Spleen (tissue), 13 donors: ENCODE measurements at regions of chr20 and their contacts with region 1.

Region 1: DNA sequence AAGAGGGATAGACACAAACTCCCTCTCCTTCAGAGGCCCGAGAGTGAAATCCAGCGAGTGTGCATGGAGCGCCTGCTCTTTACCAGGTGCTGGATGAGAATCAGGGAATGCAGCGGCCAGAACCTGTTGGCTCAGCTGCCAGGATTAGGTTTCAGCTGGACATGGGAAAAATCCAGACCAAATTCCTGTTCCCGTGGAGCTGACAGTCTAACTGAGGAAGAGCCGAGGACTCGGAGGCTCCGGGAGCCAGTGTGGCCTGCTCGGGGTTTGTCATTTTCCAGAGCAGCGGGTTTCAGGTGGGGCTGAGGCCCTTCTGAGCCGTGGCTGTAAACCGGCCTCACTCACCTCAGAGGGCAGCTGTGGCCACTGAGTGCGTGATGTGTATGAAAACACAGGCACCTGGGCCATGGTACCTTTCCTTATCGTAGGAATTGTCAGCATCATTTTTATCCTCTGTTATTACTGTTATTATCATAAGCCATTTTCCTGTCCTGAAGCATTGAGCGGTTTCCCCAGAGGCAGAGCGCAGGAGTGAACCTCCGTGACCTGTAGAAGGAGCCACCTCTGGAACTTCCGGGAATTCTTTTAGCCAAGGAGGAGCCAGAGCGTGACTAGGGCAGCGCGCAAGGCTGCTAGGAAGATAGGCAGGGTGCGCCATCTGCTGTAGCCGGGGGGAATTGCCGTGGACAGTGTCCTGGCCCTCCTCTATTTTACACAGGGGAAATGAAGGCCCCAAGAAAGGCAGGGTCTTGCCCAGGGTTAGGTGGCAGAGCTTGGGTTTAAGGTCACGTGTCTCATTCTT is 27.3 kb downstream of the PKIG start:
- DNase-seq: peak; percentile 94
- H3K4me3 ChIP-seq: peak overlapping the region in 3 of 8 donors; percentile 5 to 49 (median 17)
- H3K27ac ChIP-seq: peak overlapping the region in 7 of 8 donors; percentile 62 to 82 (median 78)
- H3K4me1 ChIP-seq: peaks cover 18 to 53% (median 35%) of the 10 kb centered on the region in 6 donors
- H3K27me3 ChIP-seq: no peaks in the 10 kb centered on the region
- CTCF ChIP-seq: peak; percentile 84 to 99 (median 96)
- POLR2A ChIP-seq: no peak

Region 2: DNA sequence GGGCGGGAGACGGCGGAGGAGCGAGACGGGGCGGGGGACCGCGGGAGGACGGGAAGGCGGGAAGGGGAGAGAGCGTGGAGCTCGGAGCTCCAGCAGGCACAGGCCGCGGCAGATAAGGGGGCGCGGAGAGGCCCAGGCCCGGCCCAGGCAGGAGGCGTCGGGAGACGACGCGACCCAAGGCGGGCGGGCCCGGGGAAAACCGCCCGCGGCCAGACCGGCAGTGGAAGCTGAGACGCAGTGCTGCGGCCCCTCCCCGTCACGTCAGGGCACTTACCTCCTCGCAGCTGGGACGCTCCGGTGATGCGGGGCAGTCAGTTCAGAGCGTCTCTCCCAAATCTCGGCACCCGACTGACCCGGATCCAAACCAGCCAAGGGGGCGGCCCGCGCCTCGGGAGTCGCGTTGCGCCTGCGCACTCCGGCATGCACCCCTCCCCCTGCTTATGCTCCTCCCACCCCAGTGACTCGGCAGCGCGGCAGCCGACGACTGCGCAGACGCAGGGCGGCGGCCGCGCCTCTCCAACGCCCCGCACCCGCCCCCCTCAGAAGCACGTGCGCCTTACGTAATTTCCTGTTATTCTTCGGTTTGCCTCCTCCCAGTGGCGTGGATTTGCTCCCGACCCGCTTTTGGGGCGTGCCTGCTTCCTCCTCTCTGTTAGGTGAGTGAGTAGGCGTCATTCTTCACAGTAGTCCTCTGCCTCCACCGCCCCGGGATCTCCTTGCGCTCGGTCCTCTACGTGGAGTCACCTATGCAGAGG is 399.1 kb before region 1 on chr20 and contains the start of gene OSER1:
- intact Hi-C with region 1: loop called (anchors 10 kb)
- DNase-seq: peak; percentile 99
- H3K4me3 ChIP-seq: peak within 1 kb of the TSS; percentile 76 to 99 (median 95)
- H3K27ac ChIP-seq: peak within 1 kb of the TSS; percentile 87 to 99 (median 98)
- H3K4me1 ChIP-seq: peaks cover 18 to 76% (median 58%) of the 10 kb centered on the region in 6 donors
- H3K27me3 ChIP-seq: no peaks in the 10 kb centered on the region
- CTCF ChIP-seq: peak in 4 of 11 experiments; percentile 17 to 51 (median 40)
- POLR2A ChIP-seq: peak; percentile 86 to 95 (median 94)
- total RNA-seq, gene OSER1: 28.5 to 42.0 (median 36.1) TPM

Region 3: GRCh38 chr20:44388466-44389023 is 221.2 kb before region 1 on chr20:
- intact Hi-C with region 1: loop called (anchors 5 kb)
- DNase-seq: peak; percentile 88
- H3K4me3 ChIP-seq: peak overlapping the region in 1 of 8 donors; percentile 37
- H3K27ac ChIP-seq: no peak overlapping the region
- H3K4me1 ChIP-seq: peaks cover 0 to 11% (median 7%) of the 10 kb centered on the region in 6 donors
- H3K27me3 ChIP-seq: peaks cover 0 to 65% (median 3%) of the 10 kb centered on the region in 7 donors
- CTCF ChIP-seq: peak in 10 of 11 experiments; percentile 40 to 78 (median 60)
- POLR2A ChIP-seq: no peak

Region 4: GRCh38 chr20:44475694-44476560 is 133.8 kb before region 1 on chr20 and contains the start of gene TTPAL:
- intact Hi-C with region 1: loop called (anchors 5 kb)
- DNase-seq: peak; percentile 98
- H3K4me3 ChIP-seq: peak within 1 kb of the TSS; percentile 53 to 80 (median 61)
- H3K27ac ChIP-seq: peak within 1 kb of the TSS; percentile 85 to 97 (median 93)
- H3K4me1 ChIP-seq: peaks cover 4 to 57% (median 31%) of the 10 kb centered on the region in 6 donors
- H3K27me3 ChIP-seq: no peaks in the 10 kb centered on the region
- CTCF ChIP-seq: peak in 10 of 11 experiments; percentile 18 to 68 (median 45)
- POLR2A ChIP-seq: peak in 2 of 3 donors; percentile 95
- total RNA-seq, gene TTPAL: 11.1 to 16.3 (median 12.3) TPM

Region 5: DNA sequence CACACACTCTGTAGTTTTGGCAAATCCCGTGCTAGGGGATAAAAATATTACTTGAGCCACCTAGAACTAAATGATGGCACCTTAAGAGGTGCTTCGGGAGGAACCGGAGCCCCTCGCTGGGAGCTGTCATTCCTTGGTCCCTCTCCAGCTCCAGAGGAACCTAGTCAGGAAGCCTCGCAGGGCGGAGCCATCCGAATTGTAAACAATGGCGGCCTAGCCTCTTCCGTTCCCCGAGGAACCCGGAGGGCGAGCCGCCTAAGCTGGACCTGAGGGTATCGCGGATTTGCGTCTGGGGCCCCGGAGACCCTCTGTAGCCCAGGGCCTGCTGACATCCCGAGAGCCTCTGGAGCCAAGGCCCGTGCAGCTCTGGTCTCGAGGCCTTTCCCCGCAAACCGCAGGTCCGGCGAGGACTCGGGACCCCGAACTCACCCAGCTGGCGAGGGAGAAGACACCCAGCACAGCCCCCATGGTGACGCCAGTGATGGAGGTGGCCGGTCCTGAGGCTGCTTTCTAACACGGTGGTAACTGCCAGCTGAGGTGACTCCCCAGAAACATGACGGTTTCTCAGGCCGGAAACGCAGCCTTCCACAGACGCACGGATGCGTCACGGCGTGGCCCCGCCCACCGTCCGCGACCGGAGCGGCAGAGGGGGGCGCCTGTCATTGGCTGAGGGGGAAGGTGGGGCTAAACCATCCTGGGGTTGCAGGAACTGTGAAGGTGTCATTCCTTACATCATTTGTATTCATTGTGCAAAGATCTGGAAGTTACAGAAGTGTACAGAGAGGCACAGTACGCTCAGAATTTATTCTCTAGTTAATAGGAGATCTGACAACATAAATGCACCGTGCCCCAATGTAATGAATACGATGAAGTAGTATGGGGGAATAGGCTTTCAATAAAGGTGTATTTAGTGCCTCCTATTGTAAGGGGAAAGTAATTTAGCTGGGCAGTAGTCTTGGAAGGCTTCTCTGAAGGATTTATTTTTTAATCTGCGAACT is 87.9 kb before region 1 on chr20 and contains the start of gene SERINC3:
- intact Hi-C with region 1: loop called (anchors 10 kb)
- DNase-seq: peak; percentile 99
- H3K4me3 ChIP-seq: peak within 1 kb of the TSS; percentile 68 to 97 (median 76)
- H3K27ac ChIP-seq: peak within 1 kb of the TSS; percentile 92 to 100 (median 98)
- H3K4me1 ChIP-seq: peaks cover 27 to 56% (median 50%) of the 10 kb centered on the region in 6 donors
- H3K27me3 ChIP-seq: no peaks in the 10 kb centered on the region
- CTCF ChIP-seq: peak in 1 of 11 experiments; percentile 42
- POLR2A ChIP-seq: peak; percentile 9 to 54 (median 35)
- total RNA-seq, gene SERINC3: 73.2 to 117 (median 90.3) TPM

Region 6: GRCh38 chr20:44942264-44942973 is 332.7 kb after region 1 on chr20:
- intact Hi-C with region 1: no loop called
- DNase-seq: no peak
- H3K4me3 ChIP-seq: no peak overlapping the region
- H3K27ac ChIP-seq: no peak overlapping the region
- H3K4me1 ChIP-seq: peaks cover 0 to 13% (median 0%) of the 10 kb centered on the region in 6 donors
- H3K27me3 ChIP-seq: no peaks in the 10 kb centered on the region
- CTCF ChIP-seq: no peak
- POLR2A ChIP-seq: no peak

Region 7: DNA sequence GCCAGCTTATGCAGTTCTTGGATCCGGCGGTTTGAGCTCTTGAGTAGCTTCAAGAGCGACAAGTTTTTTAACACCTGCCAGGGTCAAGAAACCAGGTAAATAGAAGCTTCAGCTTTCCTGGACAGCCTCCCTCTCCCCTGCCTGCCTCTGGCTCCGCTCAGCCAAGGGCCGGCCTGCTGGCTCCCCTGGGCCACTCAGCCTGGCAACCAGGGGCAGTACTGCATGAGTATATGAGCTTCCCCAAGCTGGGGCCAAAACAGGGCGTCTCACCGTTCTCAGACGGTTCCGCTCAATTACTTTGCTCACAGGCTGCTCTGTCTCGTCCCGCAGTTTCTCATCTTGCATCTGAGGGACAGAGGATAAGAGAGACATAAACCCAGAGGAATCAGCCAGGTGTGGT is 767.6 kb after region 1 on chr20:
- intact Hi-C with region 1: no loop called
- DNase-seq: no peak
- H3K4me3 ChIP-seq: no peak overlapping the region
- H3K27ac ChIP-seq: no peak overlapping the region
- H3K4me1 ChIP-seq: peaks cover 8 to 22% (median 21%) of the 10 kb centered on the region in 6 donors
- H3K27me3 ChIP-seq: no peaks in the 10 kb centered on the region
- CTCF ChIP-seq: no peak
- POLR2A ChIP-seq: no peak